HepG2 (cell line): ENCODE measurements at regions of chr20 and their contacts with region 1.

Region 1: GRCh38 chr20:40251284-40251932 is 437.6 kb downstream of the MAFB start:
- DNase-seq: peak; percentile 70
- ATAC-seq: peak; percentile 96
- H3K4me3 ChIP-seq: no peak overlapping the region
- H3K27ac ChIP-seq: no peak overlapping the region
- H3K4me1 ChIP-seq: no peaks in the 10 kb centered on the region
- H3K27me3 ChIP-seq: no peaks in the 10 kb centered on the region
- CTCF ChIP-seq: peak; percentile 87
- EP300 ChIP-seq: no peak
- POLR2A ChIP-seq: no peak
- RAD21 ChIP-seq: peak; percentile 49

Region 2: DNA sequence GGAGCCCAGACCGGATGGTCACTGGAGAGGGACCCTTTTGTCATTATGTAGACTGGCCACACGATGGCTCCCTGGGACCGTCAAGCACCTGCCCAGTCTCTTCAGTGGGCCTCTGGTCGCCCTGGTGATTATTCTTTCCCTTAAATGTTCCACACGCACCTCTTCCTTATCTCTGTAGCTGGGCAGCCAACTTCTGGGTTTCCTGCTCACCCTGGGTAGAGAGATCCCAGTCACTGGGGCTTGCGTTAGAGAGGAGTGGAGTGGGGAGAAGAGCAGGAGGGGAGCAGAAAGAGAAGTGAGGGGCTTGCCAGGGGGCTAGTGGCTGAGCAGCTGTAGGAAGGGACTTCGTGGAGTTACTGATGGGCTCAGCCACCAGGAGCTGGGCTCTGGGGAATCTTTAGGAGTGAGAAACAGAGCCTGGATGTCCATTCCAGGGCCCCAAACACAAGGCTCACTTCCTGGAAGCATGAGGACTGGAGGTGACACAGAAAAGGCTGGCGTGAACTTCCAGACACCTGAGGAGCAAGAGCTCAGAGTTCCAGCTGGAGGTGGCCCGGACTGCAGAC is 1139.1 kb before region 1 on chr20:
- CTCF ChIA-PET with region 1: interaction called, 9 read pairs
- POLR2A ChIA-PET with region 1: no interaction called
- in situ Hi-C with region 1: loop called (anchors 10 kb)
- intact Hi-C with region 1: loop called (anchors 5 kb)
- DNase-seq: peak; percentile 65
- ATAC-seq: peak; percentile 97
- H3K4me3 ChIP-seq: peak overlapping the region in 1 of 3 experiments; percentile 6; a peak in 1 of 6 replicates
- H3K27ac ChIP-seq: no peak overlapping the region
- H3K4me1 ChIP-seq: peaks cover 15% of the 10 kb centered on the region; the same call in 1 of the 2 replicates
- H3K27me3 ChIP-seq: peaks cover 4 to 23% of the 10 kb centered on the region in 2 experiments; a peak in 3 of 5 replicates
- CTCF ChIP-seq: peak; percentile 96
- EP300 ChIP-seq: no peak
- POLR2A ChIP-seq: no peak
- RAD21 ChIP-seq: peak; percentile 90

Region 3: DNA sequence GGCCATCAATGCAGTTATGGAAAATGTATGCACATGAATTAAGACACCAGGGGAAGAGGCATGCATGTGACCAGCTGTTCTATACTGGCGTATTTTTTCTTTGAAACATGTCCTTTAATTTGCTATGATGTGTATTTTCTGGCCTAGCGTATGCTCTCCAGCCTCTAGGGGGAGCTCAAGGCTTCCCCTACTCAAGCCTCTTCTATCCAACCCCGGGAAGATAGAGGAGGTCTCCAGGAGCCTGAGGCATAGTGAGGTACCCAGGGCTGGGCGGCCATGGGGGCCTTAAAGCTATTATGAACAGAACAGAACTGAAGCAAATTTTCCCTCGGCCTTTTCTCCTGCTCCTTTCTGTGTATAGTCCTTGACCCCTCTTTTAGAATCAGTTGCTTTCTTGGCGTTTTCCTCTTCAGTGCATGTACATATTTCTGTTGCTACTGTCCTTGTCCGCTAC is 91.3 kb before region 1 on chr20:
- CTCF ChIA-PET with region 1: interaction called, 4 read pairs
- POLR2A ChIA-PET with region 1: no interaction called
- in situ Hi-C with region 1: no loop called
- intact Hi-C with region 1: loop called (anchors 1 kb)
- DNase-seq: peak; percentile 60
- ATAC-seq: peak; percentile 99
- H3K4me3 ChIP-seq: no peak overlapping the region
- H3K27ac ChIP-seq: no peak overlapping the region
- H3K4me1 ChIP-seq: no peaks in the 10 kb centered on the region
- H3K27me3 ChIP-seq: no peaks in the 10 kb centered on the region
- CTCF ChIP-seq: peak; percentile 73
- EP300 ChIP-seq: no peak
- POLR2A ChIP-seq: no peak
- RAD21 ChIP-seq: no peak

Region 4: GRCh38 chr20:40233406-40233805 is 18.0 kb before region 1 on chr20:
- CTCF ChIA-PET with region 1: no interaction called
- POLR2A ChIA-PET with region 1: no interaction called
- in situ Hi-C with region 1: no loop called
- intact Hi-C with region 1: no loop called
- DNase-seq: no peak
- ATAC-seq: no peak
- H3K4me3 ChIP-seq: no peak overlapping the region
- H3K27ac ChIP-seq: no peak overlapping the region
- H3K4me1 ChIP-seq: no peaks in the 10 kb centered on the region
- H3K27me3 ChIP-seq: no peaks in the 10 kb centered on the region
- CTCF ChIP-seq: no peak
- EP300 ChIP-seq: no peak
- POLR2A ChIP-seq: no peak
- RAD21 ChIP-seq: no peak

Region 5: DNA sequence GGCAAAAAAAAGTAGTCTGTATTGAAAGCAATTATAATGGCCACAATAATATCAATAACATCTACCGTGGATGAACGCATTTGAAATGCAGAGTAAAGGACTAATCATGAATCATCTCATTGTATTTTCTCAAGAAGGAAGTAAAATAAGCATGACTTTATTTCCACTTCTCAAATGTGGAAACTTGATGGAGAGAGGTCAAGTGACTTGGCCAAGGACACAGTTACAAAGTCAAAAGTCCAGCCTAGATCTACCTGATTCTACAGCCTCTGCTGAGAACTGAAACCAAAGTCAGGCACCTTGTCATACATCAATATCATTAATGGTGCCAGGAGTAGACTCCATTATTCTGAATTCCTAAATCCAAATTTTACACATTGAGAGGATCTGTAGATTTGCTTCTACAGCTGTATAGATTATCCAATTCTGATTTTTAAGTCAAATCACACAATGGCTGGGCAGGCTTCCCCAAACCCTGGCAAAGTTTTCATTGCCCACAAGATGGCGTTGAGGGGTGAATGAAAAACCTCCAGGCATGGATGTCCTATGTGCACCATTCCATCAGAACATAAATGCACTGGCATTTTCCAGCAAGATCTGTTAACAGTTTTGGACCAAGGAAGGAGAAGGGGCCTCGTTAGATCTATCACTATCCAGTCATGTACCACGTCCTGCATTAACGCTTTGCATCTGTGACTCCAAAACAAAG is 14.6 kb after region 1 on chr20:
- CTCF ChIA-PET with region 1: no interaction called
- POLR2A ChIA-PET with region 1: no interaction called
- in situ Hi-C with region 1: no loop called
- intact Hi-C with region 1: no loop called
- DNase-seq: peak; percentile 35
- ATAC-seq: peak; percentile 85
- H3K4me3 ChIP-seq: no peak overlapping the region
- H3K27ac ChIP-seq: no peak overlapping the region
- H3K4me1 ChIP-seq: no peaks in the 10 kb centered on the region
- H3K27me3 ChIP-seq: no peaks in the 10 kb centered on the region
- CTCF ChIP-seq: peak; percentile 56
- EP300 ChIP-seq: no peak
- POLR2A ChIP-seq: no peak
- RAD21 ChIP-seq: no peak; the same call in 1 of the 2 replicates